B cell (primary cell): ENCODE measurements at regions of chr3 and their contacts with region 1.

Region 1: DNA sequence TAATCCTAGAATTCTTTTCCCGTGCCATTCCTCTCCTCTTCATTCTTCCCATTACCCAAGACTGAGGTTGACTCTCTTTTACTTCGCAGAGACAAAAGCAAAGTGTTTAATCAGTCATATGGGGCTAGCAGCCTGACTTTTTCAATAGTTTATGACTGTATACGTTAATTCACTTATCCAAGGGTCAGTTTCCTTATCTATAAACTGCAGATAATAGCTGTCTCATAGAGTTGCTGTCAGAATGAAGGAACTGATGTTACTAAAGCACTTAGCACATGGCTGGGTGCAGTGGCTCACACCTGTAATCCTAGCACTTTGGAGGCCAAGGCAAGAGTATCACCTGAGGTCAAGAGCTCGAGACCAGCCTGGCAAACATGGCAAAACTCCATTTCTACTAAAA is 43.5 kb upstream of the ULK4 start:
- DNase-seq: no peak
- ATAC-seq: no peak
- H3K4me3 ChIP-seq: no peak overlapping the region
- H3K4me3 Mint-ChIP-seq: no peak overlapping the region
- H3K27ac ChIP-seq: no peak overlapping the region
- H3K27ac Mint-ChIP-seq: no peak overlapping the region
- H3K4me1 ChIP-seq: peaks cover 11 to 13% of the 10 kb centered on the region in 2 donors
- H3K4me1 Mint-ChIP-seq: peaks cover 13% of the 10 kb centered on the region
- H3K27me3 ChIP-seq: no peaks in the 10 kb centered on the region
- H3K27me3 Mint-ChIP-seq: no peaks in the 10 kb centered on the region
- CTCF ChIP-seq: no peak

Region 2: DNA sequence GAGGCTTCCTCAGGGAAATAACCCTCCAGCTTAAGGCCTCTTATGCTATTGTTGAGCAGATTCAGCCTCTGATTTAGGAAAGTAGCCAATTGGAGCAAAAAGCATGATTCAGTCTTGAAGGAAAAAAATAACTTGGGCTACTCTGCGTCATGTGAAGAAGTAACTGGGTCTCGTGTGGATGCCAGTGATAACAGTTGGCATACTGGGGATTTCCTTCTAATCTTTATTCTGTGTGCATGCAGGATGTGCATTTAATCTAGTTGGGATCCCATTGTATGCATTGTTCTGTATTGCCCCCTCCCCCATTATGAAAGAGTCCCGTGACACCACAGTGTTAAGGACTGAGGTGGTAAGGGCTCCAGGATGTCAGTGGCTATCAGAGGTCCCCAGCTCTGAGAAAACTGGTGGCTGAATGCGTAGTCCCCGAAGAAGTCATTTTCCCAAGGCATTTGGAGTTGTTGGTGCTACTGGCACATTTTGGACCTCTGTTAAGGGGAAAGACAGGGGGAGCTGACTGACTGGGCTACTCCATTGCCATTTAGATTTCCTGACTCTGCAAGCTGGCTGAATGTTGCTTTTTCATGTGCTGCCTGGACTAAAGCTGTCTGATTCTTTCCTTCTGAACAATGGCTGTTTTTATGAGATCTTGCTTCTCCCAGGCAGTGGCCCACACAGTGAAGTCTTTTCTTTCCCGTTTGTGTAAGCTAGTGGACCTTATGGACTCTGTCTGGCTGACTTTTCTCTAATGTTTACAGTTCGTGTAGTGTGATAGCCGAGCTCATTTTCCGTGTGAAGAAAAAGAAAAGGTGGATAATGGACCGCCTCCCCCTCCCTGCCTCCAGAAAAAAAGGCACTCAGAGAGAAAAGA is 47.3 kb after region 1 on chr3:
- CTCF ChIA-PET with region 1: no interaction called
- POLR2A ChIA-PET with region 1: interaction called, 11 read pairs
- intact Hi-C with region 1: no loop called
- DNase-seq: no peak
- ATAC-seq: no peak
- H3K4me3 ChIP-seq: no peak overlapping the region
- H3K4me3 Mint-ChIP-seq: peak overlapping the region; percentile 1
- H3K27ac ChIP-seq: peak overlapping the region in 1 of 2 donors; percentile 54
- H3K27ac Mint-ChIP-seq: peak overlapping the region; percentile 62
- H3K4me1 ChIP-seq: peaks cover 61 to 71% of the 10 kb centered on the region in 2 donors
- H3K4me1 Mint-ChIP-seq: peaks cover 82% of the 10 kb centered on the region
- H3K27me3 ChIP-seq: no peaks in the 10 kb centered on the region
- H3K27me3 Mint-ChIP-seq: no peaks in the 10 kb centered on the region
- CTCF ChIP-seq: no peak